ENCODE measurements at regions of chr2 and their contacts with region 1.

Region 1: DNA sequence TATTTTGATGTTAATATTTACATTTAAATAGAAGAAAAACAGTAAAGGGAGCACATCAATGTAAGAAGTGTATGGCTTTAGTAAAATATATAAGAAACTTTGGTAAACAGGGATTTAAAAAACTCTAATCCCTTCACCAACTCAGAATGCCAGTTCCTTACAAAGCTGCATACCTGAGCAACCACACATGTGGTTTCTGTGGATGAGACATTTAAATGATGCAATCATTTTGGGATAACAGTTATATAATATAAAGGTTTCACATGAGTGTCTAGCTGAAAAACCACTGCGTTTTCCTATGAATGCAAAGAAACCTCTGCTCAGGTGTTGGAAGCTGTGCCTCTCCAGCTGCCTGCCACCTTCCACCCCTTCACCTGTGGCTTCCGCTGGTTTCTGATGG is 209.1 kb upstream of the REV1 start:
- DNase-seq: no peak
- ATAC-seq: no peak
- H3K4me3 ChIP-seq: no peak overlapping the region
- H3K4me3 Mint-ChIP-seq: no peak overlapping the region
- H3K27ac ChIP-seq: no peak overlapping the region
- H3K27ac Mint-ChIP-seq: no peak overlapping the region
- H3K4me1 ChIP-seq: no peaks in the 10 kb centered on the region
- H3K4me1 Mint-ChIP-seq: peaks cover 0 to 3% (median 3%) of the 10 kb centered on the region in 3 donors
- H3K27me3 ChIP-seq: no peaks in the 10 kb centered on the region
- H3K27me3 Mint-ChIP-seq: peaks cover 0 to 3% of the 10 kb centered on the region in 2 donors

Region 2: DNA sequence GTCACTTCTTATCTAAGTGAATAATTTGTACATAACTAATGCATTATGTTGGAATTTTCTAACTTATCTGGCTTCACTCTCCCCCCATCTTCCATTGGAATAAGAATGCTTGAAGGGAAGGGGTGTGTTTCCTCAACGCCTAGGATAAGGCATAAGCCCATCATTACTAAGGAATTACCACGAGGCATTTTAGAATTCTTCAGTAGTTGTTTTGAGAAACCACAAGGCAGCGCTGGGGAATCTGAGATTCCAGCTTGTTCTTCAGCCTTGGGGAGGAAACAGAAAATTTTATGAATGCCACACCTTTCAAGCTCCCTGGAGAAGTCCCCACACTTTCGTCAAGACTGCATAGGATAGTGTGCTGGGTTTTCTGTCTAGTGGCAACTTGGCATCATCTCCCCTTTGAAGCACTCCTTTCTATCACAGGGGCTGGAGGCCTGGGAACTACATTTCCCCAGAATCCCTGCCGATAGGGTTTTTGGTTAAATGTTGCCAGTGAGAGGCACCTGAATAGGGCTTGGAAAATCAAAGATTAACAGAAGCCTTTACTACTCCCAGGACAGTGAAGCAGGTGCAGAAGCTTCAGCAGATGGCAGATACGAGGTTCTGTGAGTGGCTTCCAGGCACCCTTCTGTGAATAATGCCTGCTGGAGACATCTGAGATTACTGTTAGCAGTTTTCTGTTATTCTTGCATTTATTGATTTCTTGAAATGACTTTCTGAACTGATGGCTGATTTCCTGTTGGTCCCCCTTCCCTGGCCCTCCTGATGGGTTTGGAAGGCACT is 16.4 kb before region 1 on chr2:
- CTCF ChIA-PET with region 1: no interaction called
- POLR2A ChIA-PET with region 1: no interaction called
- DNase-seq: no peak
- ATAC-seq: no peak
- H3K4me3 ChIP-seq: no peak overlapping the region
- H3K4me3 Mint-ChIP-seq: no peak overlapping the region
- H3K27ac ChIP-seq: no peak overlapping the region
- H3K27ac Mint-ChIP-seq: no peak overlapping the region
- H3K4me1 ChIP-seq: no peaks in the 10 kb centered on the region
- H3K4me1 Mint-ChIP-seq: no peaks in the 10 kb centered on the region
- H3K27me3 ChIP-seq: no peaks in the 10 kb centered on the region
- H3K27me3 Mint-ChIP-seq: no peaks in the 10 kb centered on the region

Region 3: DNA sequence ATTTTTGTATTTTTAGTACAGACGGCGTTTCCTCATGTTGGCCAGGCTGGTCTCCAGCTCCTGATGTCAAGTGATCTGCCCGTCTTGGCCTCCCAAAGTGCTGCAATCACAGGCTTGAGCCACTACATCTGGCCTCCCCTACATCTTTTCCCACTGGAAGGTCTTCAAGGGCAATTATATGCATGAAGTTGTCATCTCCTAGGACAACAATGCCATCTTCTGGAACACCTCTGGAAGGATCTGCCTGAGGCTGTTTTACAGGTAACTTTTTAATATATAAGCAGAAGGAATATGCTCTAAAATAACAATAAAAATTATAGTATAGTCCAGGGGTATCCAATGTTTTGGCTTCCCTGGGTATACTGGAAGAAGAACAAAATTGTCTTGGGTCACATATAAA is 122.1 kb after region 1 on chr2:
- CTCF ChIA-PET with region 1: no interaction called
- POLR2A ChIA-PET with region 1: interaction called in 1 of 2 experiments, 16 read pairs
- DNase-seq: no peak
- ATAC-seq: no peak
- H3K4me3 ChIP-seq: no peak overlapping the region
- H3K4me3 Mint-ChIP-seq: no peak overlapping the region
- H3K27ac ChIP-seq: no peak overlapping the region
- H3K27ac Mint-ChIP-seq: no peak overlapping the region
- H3K4me1 ChIP-seq: no peaks in the 10 kb centered on the region
- H3K4me1 Mint-ChIP-seq: no peaks in the 10 kb centered on the region
- H3K27me3 ChIP-seq: peaks cover 0 to 3% of the 10 kb centered on the region in 2 experiments
- H3K27me3 Mint-ChIP-seq: no peaks in the 10 kb centered on the region

Measured in T-cell (primary cell).